Panc1 (cell line): ENCODE measurements at regions of chr6 and their contacts with region 1.

Region 1: DNA sequence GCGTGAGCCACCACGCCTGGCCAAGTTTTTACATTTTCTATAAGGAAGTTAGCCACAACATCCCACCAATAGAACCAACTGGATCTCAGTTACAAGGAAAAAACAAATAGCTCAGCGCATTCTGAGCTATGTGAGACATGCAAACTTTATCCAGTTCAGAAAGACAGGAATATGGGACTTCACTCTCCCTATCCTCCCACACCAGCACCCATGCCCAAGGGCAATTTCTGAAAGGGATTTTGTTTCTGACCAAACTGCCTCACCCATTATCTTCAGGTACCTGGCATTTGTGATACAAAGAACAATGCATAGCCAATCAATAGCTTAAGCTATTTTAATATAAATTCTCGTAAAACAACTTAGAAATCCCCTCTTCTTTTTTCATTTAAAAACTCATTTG is 117.2 kb upstream of the LOC128125822 start:
- DNase-seq: no peak
- ATAC-seq: no peak
- H3K4me3 ChIP-seq: no peak overlapping the region
- H3K27ac ChIP-seq: no peak overlapping the region
- H3K4me1 ChIP-seq: no peaks in the 10 kb centered on the region
- H3K27me3 ChIP-seq: no peaks in the 10 kb centered on the region
- CTCF ChIP-seq: no peak

Region 2: DNA sequence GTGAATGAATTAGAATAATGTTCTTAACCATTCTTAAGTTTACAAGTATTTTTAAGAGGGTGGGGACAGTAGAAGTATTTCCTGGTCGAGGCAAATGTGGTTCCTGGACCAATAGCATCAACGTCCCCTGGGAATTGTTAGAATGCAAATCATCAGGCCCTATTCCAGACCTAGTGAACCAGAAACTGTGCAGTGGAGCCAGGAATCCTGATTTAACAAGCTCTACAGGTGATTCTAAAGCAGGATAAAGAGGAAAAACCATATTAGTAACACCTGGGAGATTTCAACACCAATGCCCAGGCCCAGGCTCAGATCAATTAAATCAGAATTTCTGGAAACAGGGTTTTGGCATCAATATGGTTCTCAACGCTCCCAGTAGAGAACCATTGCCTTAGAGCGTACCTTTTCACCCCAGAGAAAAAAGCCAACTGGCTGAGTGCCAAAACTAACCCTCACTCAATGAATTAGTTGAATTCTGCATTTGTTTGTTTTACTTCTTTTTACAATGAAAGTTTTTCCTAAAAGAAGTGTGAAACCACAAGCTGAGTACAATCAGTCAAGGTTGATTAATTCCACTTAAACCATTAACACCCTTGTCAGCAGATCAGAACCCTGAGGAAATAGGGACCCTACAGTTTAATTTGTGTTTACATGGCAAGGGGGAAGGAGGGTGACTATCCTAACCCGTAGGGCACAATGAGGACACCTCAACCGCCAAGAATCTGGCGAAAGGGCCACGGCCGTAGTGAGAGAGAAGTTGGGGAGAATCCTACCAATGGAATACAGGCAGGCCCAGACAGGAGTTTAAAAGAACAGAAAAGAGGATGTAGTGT is 82.3 kb after region 1 on chr6:
- CTCF ChIA-PET with region 1: no interaction called
- POLR2A ChIA-PET with region 1: interaction called, 11 read pairs
- in situ Hi-C with region 1: no loop called
- intact Hi-C with region 1: no loop called
- DNase-seq: no peak
- ATAC-seq: no peak
- H3K4me3 ChIP-seq: no peak overlapping the region
- H3K27ac ChIP-seq: no peak overlapping the region
- H3K4me1 ChIP-seq: no peaks in the 10 kb centered on the region
- H3K27me3 ChIP-seq: no peaks in the 10 kb centered on the region
- CTCF ChIP-seq: no peak

Region 3: DNA sequence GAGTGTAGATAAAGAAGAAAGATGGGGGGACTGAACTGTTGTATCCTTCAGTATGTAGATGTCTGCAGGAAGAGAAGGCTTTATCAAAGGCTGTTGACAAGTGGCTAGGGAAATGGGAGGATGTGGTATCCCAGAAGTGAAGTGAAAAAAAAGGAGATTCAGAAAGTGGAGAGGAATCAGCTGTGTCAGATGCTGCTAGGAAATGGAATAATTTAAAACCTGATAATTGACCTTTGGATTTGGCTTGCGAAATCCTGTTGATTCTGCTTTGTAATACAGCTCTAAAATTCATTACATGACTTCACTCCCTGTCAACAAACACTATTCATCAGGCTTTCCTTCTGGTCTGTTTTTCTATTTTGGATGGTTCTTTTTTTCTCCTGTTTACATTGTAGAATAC is 222.2 kb after region 1 on chr6:
- CTCF ChIA-PET with region 1: no interaction called
- POLR2A ChIA-PET with region 1: no interaction called
- in situ Hi-C with region 1: no loop called
- intact Hi-C with region 1: no loop called
- DNase-seq: no peak
- ATAC-seq: no peak
- H3K4me3 ChIP-seq: no peak overlapping the region
- H3K27ac ChIP-seq: no peak overlapping the region
- H3K4me1 ChIP-seq: no peaks in the 10 kb centered on the region
- H3K27me3 ChIP-seq: no peaks in the 10 kb centered on the region
- CTCF ChIP-seq: no peak